ENCODE measurements at regions of chr2 and their contacts with region 1.

Region 1: GRCh38 chr2:120109186-120110061 is 96.5 kb downstream of the EPB41L5 start:
- DNase-seq: peak; percentile 64
- H3K4me3 ChIP-seq: no peak overlapping the region
- H3K27ac ChIP-seq: no peak overlapping the region
- H3K4me1 ChIP-seq: peaks cover 26% of the 10 kb centered on the region
- H3K27me3 ChIP-seq: no peaks in the 10 kb centered on the region
- CTCF ChIP-seq: peak; percentile 18 to 30
- POLR2A ChIP-seq: no peak

Region 2: GRCh38 chr2:119647440-119648169 is 461.8 kb before region 1 on chr2:
- CTCF ChIA-PET with region 1: no interaction called
- POLR2A ChIA-PET with region 1: no interaction called
- dilution Hi-C with region 1: no loop called
- intact Hi-C with region 1: loop called (anchors 5 kb)
- DNase-seq: peak; percentile 86
- H3K4me3 ChIP-seq: no peak overlapping the region
- H3K27ac ChIP-seq: peak overlapping the region; percentile 85
- H3K4me1 ChIP-seq: peaks cover 71% of the 10 kb centered on the region
- H3K27me3 ChIP-seq: no peaks in the 10 kb centered on the region
- CTCF ChIP-seq: no peak
- POLR2A ChIP-seq: no peak

Region 3: DNA sequence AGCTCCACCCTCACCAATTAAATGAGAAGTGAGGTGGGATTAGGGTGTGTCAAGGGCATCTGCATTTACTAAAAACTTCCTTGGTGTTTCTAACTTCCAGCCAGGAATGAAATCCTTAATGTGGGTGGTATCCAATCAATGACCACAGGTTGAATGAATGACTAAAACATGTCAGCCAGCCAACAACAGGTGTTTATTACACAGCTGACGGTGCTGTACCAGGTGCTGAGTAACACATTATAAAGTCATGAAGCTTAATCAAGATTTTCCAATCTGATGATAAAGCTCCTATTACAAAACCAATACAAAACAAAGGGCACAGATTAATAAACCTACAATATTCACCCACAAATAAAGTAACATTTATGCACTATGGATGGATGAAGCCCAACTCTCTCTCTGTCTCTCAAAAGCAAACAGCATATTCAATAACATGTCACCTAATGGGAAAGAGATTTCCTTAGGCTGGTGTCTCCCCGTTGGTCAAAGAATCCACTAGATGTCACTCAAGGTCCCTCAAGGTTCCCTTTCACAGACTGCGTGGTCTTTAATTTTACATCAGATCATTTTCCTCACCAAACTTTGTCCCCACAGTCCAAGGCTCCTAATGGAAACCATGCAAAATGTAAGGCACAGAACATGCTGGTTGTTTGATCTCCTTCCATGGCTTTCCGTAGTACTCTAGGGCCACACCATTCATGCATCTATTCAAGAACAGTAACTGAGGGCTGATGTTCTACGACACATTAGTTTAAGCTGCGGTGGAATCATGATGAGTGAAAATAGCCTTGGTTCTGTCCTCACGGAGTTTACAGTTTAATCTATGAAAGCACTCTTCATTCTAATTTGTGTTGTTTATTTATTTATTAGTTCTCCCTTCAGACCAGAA is 356.1 kb before region 1 on chr2:
- CTCF ChIA-PET with region 1: interaction called, 3 read pairs
- POLR2A ChIA-PET with region 1: no interaction called
- dilution Hi-C with region 1: no loop called
- intact Hi-C with region 1: loop called (anchors 1 kb)
- DNase-seq: peak; percentile 65
- H3K4me3 ChIP-seq: no peak overlapping the region
- H3K27ac ChIP-seq: no peak overlapping the region
- H3K4me1 ChIP-seq: peaks cover 14% of the 10 kb centered on the region
- H3K27me3 ChIP-seq: no peaks in the 10 kb centered on the region
- CTCF ChIP-seq: peak; percentile 67 to 68
- POLR2A ChIP-seq: no peak

Region 4: GRCh38 chr2:119888680-119889079 is 220.7 kb before region 1 on chr2:
- CTCF ChIA-PET with region 1: no interaction called
- POLR2A ChIA-PET with region 1: no interaction called
- dilution Hi-C with region 1: no loop called
- intact Hi-C with region 1: no loop called
- DNase-seq: peak; percentile 27
- H3K4me3 ChIP-seq: no peak overlapping the region
- H3K27ac ChIP-seq: no peak overlapping the region
- H3K4me1 ChIP-seq: peaks cover 5% of the 10 kb centered on the region
- H3K27me3 ChIP-seq: no peaks in the 10 kb centered on the region
- CTCF ChIP-seq: no peak
- POLR2A ChIP-seq: no peak

Region 5: DNA sequence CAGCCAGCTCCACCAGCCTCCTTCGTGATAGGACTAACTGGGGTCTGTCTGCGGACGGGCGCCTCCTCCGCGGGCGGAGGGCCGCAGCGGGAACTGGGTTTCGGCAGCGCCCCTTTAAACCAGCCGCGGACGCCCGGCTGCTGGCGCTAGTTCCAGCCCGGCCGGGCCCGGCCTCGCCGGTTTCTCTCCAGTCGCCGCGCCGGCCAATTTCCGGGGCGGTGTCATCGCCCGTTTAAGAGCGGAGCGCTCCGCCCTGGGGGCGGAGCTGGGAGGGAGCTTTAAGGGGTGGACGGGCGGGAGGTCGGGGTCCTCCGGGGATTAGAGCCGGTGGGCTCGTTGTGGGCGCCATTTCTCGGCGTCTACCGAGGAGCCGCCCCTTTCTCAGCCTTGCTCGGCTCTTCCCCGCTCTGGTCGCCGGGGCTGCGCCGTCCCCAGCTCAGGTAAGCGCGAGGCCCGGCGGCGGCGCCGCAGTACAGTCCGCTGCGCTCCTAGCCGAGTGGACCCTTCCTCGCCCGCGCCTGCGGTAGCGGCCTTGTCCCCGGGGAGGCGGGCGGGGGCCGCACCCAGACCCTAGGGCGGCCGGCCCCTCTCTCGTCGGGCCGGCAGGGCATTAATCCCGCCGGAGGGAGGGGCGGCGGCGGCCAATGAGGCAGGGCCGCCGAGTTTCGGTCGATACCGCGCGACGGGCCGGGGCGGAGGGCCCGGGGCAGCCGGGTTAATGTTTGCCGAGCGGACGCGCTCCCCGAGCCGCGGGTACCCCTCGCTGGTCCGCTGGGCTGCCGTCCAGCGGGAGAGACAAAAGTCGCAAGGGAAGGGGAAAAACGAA is 96.4 kb before region 1 on chr2 and contains the start of gene EPB41L5:
- CTCF ChIA-PET with region 1: interaction called, 4 read pairs
- POLR2A ChIA-PET with region 1: no interaction called
- dilution Hi-C with region 1: no loop called
- intact Hi-C with region 1: loop called (anchors 2 kb)
- DNase-seq: peak; percentile 90
- H3K4me3 ChIP-seq: peak within 1 kb of the TSS; percentile 35 to 88 (median 46)
- H3K27ac ChIP-seq: peak within 1 kb of the TSS; percentile 30
- H3K4me1 ChIP-seq: peaks cover 24% of the 10 kb centered on the region
- H3K27me3 ChIP-seq: no peaks in the 10 kb centered on the region
- CTCF ChIP-seq: no peak
- POLR2A ChIP-seq: no peak
- total RNA-seq, gene EPB41L5: 13.6 and 15.1 TPM in 2 replicates

Region 6: GRCh38 chr2:120206022-120206581 is 96.7 kb after region 1 on chr2:
- CTCF ChIA-PET with region 1: no interaction called
- POLR2A ChIA-PET with region 1: no interaction called
- dilution Hi-C with region 1: no loop called
- intact Hi-C with region 1: no loop called
- DNase-seq: no peak
- H3K4me3 ChIP-seq: no peak overlapping the region
- H3K27ac ChIP-seq: no peak overlapping the region
- H3K4me1 ChIP-seq: no peaks in the 10 kb centered on the region
- H3K27me3 ChIP-seq: no peaks in the 10 kb centered on the region
- CTCF ChIP-seq: peak; percentile 52 to 65
- POLR2A ChIP-seq: no peak

Region 7: DNA sequence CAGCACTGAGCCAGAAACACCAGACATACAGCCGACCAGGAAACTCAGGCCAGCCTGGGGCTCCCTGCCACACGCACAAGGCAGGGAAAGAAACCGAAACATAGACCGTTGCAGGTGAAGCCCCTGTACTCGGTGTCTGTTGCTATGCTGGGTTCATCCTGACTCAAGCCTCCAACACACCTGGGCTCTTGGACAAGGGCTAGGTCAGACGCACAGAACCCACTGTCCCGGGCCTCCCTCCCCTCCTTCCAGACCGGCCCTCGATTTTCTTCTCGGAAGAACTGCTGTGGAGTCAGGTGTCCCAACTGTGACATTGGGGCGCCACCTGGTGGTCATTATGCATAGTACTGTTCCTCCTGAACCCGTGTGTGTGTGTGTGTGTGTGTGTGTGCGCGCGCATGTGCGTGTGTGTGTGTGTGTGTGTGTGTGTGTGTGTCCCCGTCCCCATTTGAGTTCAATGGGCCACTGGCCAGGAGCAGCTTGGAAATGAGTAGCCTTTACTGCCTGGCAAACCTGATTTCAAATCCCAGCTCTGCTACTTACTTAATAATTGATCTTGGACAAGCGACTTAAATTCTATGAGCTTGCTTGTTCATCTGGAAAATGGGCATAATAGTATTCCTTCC is 570.8 kb after region 1 on chr2:
- CTCF ChIA-PET with region 1: interaction called, 3 read pairs
- POLR2A ChIA-PET with region 1: no interaction called
- dilution Hi-C with region 1: no loop called
- intact Hi-C with region 1: loop called (anchors 2 kb)
- DNase-seq: peak; percentile 76
- H3K4me3 ChIP-seq: no peak overlapping the region
- H3K27ac ChIP-seq: no peak overlapping the region
- H3K4me1 ChIP-seq: no peaks in the 10 kb centered on the region
- H3K27me3 ChIP-seq: peaks cover 10 to 12% of the 10 kb centered on the region in 2 experiments
- CTCF ChIP-seq: peak; percentile 54 to 67
- POLR2A ChIP-seq: no peak